OCI-LY7 (cell line): ENCODE measurements at regions of chr20 and their contacts with region 1.

Region 1: DNA sequence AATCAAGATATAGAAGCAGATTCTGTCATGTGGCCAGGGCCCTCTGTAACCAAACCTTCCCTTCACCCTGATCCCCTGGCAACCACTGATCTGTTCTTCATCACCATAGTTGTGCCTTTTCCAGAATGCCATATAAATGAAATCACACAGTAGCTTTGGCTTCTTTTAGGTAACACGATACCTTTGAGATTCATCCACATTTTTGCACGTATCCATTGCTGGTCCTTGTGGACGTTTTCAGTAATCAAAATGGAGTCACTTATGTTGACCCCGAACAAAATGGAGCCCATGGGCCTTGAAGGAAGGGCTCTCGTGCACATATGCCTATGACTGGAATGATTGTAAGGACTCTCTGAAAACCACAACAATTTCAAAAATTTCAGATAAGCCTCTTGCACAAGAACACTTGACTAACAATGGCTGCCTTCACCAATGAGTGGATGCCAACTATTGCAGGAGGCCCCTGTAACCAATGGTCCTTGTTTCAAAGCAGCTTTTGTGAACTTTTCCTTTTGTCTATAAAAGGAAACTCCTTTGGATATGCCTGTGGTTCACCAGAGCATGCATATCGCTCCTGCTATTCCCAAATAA is 84.3 kb upstream of the RALY start:
- DNase-seq: no peak
- H3K4me3 ChIP-seq: no peak overlapping the region
- H3K27ac ChIP-seq: peak overlapping the region; percentile 89
- H3K4me1 ChIP-seq: peaks cover 54% of the 10 kb centered on the region
- CTCF ChIP-seq: no peak

Region 2: DNA sequence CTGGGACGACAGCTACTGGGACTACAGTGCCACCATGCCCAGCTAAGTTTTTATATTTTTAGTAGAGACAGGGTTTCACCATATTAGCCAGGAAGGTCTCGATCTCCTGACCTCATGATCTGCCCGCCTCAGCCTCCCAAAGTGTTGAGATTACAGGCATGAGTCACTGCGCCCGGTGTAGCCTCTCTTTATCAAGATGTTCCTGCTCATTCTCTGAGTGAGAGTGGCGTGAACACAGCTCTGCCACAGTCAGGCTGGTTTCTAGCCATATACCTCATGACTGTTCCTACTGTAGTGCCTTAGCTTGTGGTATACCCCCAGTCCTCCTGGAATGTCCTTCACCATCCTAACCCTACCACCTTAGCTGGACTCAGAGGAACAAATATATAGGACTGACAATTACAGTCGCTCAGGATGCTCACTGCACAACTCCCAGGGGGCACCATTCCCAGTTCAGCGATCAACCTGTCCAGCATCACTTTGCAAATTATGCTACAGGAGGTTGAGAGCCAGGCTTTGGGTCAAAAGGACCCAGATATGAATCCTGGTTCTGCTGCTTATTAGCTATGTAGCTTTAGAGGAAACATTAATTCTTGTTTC is 12.0 kb before region 1 on chr20:
- CTCF ChIA-PET with region 1: interaction called, 5 read pairs
- POLR2A ChIA-PET with region 1: interaction called, 10 read pairs
- intact Hi-C with region 1: no loop called
- DNase-seq: no peak
- H3K4me3 ChIP-seq: no peak overlapping the region
- H3K27ac ChIP-seq: no peak overlapping the region
- H3K4me1 ChIP-seq: peaks cover 52% of the 10 kb centered on the region
- CTCF ChIP-seq: peak; percentile 85